Caco-2 (cell line): ENCODE measurements at regions of chr1 and their contacts with region 1.

Region 1: DNA sequence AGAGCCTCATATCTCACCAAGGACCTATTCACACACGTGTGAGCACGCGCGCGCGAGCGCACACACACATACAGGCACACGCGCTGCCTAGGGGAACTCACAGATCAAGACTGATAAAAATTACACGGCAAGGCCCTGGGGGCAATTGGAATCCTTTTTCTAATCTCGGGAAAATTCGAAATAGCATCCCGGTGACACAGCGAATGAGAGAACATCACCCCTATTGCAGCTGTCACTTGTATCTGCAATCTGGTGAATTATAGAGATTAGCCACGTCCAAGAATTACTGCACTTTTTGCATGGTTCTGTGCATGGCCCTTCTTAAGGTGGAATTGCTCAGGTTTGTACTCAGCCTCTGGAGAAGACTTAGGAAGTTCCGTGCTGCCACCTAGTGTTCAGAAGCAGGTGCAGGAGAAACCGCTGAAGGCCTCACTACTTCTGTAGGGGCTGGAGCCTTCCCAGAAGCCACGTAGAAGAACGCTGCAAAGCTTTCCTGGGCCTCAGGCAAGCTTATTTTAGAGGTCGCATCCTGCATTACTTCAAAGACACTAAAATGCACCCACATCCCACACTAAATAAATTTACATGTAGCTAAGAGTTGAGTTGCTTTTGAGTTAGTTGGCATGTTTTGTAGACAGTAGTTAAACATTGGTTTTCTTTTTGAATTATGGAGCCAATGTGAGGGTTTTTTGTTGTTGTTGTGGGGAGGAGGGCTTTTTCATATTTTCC is 229.2 kb upstream of the CAMK1G start:
- DNase-seq: peak; percentile 80 to 84
- H3K4me3 ChIP-seq: no peak overlapping the region
- H3K4me3 Mint-ChIP-seq: no peak overlapping the region
- H3K27ac Mint-ChIP-seq: no peak overlapping the region
- H3K4me1 ChIP-seq: peaks cover 38% of the 10 kb centered on the region
- H3K4me1 Mint-ChIP-seq: peaks cover 23% of the 10 kb centered on the region
- H3K27me3 ChIP-seq: no peaks in the 10 kb centered on the region
- H3K27me3 Mint-ChIP-seq: no peaks in the 10 kb centered on the region
- CTCF ChIP-seq: peak; percentile 82 to 90

Region 2: GRCh38 chr1:208652296-208653160 is 701.7 kb before region 1 on chr1:
- CTCF ChIA-PET with region 1: no interaction called
- POLR2A ChIA-PET with region 1: no interaction called
- intact Hi-C with region 1: loop called (anchors 10 kb)
- DNase-seq: peak; percentile 55 to 60
- H3K4me3 ChIP-seq: no peak overlapping the region
- H3K4me3 Mint-ChIP-seq: no peak overlapping the region
- H3K27ac Mint-ChIP-seq: no peak overlapping the region
- H3K4me1 ChIP-seq: no peaks in the 10 kb centered on the region
- H3K4me1 Mint-ChIP-seq: no peaks in the 10 kb centered on the region
- H3K27me3 ChIP-seq: no peaks in the 10 kb centered on the region
- H3K27me3 Mint-ChIP-seq: peaks cover 13% of the 10 kb centered on the region
- CTCF ChIP-seq: peak; percentile 84 to 87

Region 3: DNA sequence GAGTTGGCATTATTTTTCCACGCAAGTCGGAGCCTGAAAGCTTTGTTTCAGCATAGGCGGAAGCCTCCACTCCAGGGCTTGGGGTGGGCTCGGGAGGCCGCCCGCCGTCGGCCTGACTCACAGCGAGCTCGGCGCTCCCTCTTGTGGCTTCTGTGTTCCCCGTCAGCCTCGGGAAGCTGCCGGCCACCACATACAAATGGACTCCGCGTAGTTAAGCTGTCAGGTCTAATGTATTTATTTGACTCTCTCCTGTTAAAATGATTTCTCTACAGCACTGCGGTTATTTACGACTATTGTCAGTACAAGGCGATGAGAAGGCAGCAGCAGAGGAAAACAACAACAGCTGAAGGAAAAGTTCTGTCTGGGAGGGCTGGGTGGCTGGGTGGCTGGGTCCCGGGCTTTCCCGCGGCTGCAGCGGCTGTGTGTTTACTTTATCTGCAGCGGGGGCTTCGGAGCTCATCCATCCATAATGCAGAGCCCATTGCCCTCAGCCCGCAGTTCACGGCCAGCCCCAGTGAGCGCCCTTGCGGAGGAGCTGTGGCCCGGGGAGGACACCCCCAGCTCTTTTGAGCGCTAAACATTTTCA is 146.5 kb before region 1 on chr1:
- CTCF ChIA-PET with region 1: interaction called, 4 read pairs
- POLR2A ChIA-PET with region 1: no interaction called
- intact Hi-C with region 1: loop called (anchors 1 kb)
- DNase-seq: peak; percentile 59 to 66
- H3K4me3 ChIP-seq: peak overlapping the region; percentile 10; the same call in 1 of the 2 replicates
- H3K4me3 Mint-ChIP-seq: peak overlapping the region; percentile 62
- H3K27ac Mint-ChIP-seq: no peak overlapping the region
- H3K4me1 ChIP-seq: no peaks in the 10 kb centered on the region
- H3K4me1 Mint-ChIP-seq: no peaks in the 10 kb centered on the region
- H3K27me3 ChIP-seq: peaks cover 1% of the 10 kb centered on the region
- H3K27me3 Mint-ChIP-seq: peaks cover 14% of the 10 kb centered on the region
- CTCF ChIP-seq: peak; percentile 55 to 91

Region 4: DNA sequence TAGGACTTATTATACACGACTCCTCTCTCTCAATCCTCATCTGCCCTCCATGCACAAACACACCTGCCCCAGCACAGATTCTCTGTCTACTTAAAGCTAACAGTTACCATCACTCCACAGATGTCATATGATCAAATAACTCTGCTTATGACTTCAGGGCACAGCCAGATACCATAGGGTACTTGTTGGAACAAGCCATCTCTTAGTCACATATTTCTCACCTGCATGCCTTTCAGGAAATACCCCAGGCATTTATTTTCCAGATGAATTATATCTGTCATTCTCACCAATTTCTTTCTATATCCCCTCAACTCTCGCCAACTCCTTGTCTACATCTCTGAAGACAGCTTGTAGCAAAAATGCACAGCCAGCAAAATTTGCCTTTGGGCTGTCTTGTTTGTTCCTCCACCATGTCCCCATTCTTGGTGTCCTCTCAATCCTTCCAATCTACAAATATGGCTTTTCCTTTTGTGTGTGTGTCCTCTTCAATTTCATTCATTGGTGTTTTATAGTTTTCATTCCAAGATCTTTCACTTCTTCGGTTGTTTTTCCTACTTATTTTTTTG is 124.7 kb before region 1 on chr1:
- CTCF ChIA-PET with region 1: no interaction called
- POLR2A ChIA-PET with region 1: no interaction called
- intact Hi-C with region 1: no loop called
- DNase-seq: no peak
- H3K4me3 ChIP-seq: no peak overlapping the region
- H3K4me3 Mint-ChIP-seq: no peak overlapping the region
- H3K27ac Mint-ChIP-seq: no peak overlapping the region
- H3K4me1 ChIP-seq: no peaks in the 10 kb centered on the region
- H3K4me1 Mint-ChIP-seq: no peaks in the 10 kb centered on the region
- H3K27me3 ChIP-seq: no peaks in the 10 kb centered on the region
- H3K27me3 Mint-ChIP-seq: peaks cover 8% of the 10 kb centered on the region
- CTCF ChIP-seq: no peak

Region 5: DNA sequence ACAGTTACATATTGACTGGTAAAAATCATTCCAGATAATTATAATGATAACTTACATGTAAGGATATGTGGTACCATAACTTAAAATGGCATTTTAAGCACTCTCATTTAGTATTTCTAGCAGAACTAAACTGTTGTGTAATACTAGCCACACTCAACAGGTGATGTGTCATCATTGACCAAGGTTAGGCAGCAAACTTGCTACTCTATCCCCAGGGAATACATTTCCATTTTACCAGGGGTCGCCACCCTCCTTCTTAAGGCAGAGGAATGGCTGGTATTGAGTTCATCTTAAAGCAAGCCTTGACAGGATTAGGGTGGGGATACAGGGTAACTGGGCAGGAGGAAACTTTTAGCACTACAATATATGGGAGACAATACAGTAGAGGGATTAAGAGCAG is 30.5 kb before region 1 on chr1:
- CTCF ChIA-PET with region 1: no interaction called
- POLR2A ChIA-PET with region 1: no interaction called
- intact Hi-C with region 1: loop called (anchors 2 kb)
- DNase-seq: no peak
- H3K4me3 ChIP-seq: no peak overlapping the region
- H3K4me3 Mint-ChIP-seq: no peak overlapping the region
- H3K27ac Mint-ChIP-seq: no peak overlapping the region
- H3K4me1 ChIP-seq: no peaks in the 10 kb centered on the region
- H3K4me1 Mint-ChIP-seq: no peaks in the 10 kb centered on the region
- H3K27me3 ChIP-seq: no peaks in the 10 kb centered on the region
- H3K27me3 Mint-ChIP-seq: no peaks in the 10 kb centered on the region
- CTCF ChIP-seq: no peak

Region 6: DNA sequence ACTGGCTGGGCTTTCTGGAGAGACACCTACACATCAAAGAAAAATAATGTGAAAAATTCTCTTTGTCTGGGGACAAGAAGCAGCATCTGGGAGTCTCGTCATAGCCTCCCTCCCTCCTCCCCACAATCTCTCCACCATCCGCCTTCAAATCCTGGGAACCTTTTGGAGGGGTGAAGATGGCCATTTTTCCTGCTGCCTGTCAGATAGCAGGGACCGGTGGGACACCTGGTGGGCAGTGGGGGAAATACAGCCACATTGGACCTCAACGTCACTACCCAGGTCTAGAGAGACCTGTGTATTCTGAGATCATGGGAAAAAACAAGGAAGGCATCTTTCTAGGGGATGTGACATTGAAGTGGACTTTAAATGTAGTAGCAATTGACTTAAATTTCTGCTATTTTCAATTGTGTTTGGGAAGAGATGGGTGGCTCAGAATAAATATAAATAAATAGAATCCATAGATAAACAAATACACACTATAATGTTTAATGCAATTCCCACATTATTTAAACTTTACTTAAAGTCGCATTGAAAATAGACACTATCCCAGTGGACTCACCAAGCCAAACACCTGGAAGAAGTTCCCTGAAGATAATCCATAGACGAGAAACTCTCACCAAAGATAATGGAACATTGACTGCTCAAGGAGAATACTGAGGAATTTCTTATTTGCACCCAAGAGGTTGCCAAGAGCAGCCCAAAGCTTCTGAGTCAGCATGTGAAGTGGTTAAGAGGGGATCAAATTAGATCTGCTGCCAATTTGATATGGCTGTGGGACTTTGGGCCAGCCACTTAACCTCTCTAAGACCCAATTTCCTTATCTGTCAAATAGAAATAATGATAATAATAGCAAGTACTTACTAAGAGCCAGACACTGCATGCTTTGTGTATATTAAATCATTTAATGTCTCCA is 81.6 kb after region 1 on chr1:
- CTCF ChIA-PET with region 1: no interaction called
- POLR2A ChIA-PET with region 1: no interaction called
- intact Hi-C with region 1: loop called (anchors 1 kb)
- DNase-seq: peak; percentile 85 to 91
- H3K4me3 ChIP-seq: no peak overlapping the region
- H3K4me3 Mint-ChIP-seq: no peak overlapping the region
- H3K27ac Mint-ChIP-seq: peak overlapping the region; percentile 0
- H3K4me1 ChIP-seq: peaks cover 45% of the 10 kb centered on the region
- H3K4me1 Mint-ChIP-seq: peaks cover 19% of the 10 kb centered on the region
- H3K27me3 ChIP-seq: no peaks in the 10 kb centered on the region
- H3K27me3 Mint-ChIP-seq: no peaks in the 10 kb centered on the region
- CTCF ChIP-seq: peak; percentile 84 to 94